Pancreas (tissue), 10 donors: ENCODE measurements at regions of chr14 and their contacts with region 1.

Region 1: DNA sequence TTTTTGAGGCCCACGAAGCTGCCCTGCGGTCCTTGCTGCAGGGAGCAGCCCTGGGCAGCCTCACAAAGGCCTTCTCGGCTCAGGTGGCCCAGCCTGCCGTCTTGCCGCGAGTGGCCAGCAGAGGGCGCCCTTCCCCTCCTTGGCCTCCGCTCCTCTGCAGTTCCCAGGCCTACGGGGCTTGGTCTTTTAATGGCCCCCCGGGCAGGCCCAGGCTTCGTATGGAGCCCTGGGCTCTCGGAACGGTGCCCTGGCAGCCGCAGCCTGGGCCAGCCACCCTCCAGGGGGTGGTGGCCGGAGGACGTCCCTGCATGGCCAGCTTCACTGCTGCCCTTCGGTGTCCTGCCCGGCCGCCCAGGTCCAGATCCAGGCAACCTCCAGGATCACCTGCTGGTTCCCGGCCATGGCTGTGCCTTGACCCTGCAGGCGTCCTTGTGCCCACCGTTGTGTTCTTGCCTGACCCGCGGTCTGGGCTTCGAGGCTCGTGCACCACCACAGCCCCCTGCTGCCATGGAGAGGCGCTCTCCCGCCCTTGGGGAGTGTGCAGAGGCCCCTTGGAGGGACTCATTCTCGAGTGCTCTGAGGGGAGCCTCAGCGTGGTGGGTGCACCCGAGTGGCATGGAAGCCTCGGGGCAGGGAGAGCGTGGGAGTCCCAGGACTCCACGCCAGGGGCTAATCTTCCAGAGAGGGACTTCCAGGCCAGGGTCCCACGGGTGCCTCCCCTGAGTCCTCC is 9.4 kb downstream of the ASPG start:
- DNase-seq: peak; percentile 45 to 96 (median 81)
- ATAC-seq: peak; percentile 80 to 96 (median 88)
- H3K4me3 ChIP-seq: no peak overlapping the region
- H3K27ac ChIP-seq: no peak overlapping the region
- H3K4me1 ChIP-seq: no peaks in the 10 kb centered on the region
- H3K27me3 ChIP-seq: peaks cover 0 to 3% (median 0%) of the 10 kb centered on the region in 4 donors
- CTCF ChIP-seq: peak; percentile 97 to 99 (median 98)

Region 2: DNA sequence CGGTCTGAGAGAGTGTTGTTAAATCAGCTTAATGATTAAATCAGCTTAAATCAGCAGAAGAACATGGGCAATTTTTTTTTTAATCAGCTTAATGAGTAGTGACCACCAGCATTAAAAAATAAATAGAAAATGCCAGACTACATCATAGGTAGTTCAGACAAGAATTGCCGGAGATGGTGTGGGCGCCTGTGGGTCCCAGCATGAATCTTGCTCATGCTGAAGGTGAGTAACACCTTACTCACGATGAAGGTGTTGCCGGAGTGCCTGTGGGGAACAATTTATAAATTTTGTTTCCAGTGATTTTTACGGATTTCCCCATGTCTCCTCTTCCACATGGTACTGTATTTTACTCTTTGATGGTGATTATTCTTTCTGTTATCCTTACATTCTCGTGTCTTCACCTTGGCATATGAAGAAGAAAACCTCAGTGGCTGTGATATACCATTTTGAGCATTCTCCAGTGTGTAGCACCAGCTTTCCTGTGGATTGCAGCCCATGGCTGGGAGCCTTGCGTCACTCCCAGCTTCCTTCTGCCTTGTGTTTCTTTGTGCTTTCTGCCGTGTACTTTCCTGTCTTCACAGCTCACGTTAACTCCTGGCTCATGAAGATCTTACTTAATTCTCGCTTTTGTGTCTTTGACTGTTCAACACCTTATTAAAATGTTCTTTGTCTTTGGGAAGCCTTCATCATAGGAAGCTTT is 161.9 kb before region 1 on chr14:
- intact Hi-C with region 1: no loop called
- DNase-seq: no peak
- ATAC-seq: no peak
- H3K4me3 ChIP-seq: no peak overlapping the region
- H3K27ac ChIP-seq: no peak overlapping the region
- H3K4me1 ChIP-seq: no peaks in the 10 kb centered on the region
- H3K27me3 ChIP-seq: no peaks in the 10 kb centered on the region
- CTCF ChIP-seq: no peak

Region 3: DNA sequence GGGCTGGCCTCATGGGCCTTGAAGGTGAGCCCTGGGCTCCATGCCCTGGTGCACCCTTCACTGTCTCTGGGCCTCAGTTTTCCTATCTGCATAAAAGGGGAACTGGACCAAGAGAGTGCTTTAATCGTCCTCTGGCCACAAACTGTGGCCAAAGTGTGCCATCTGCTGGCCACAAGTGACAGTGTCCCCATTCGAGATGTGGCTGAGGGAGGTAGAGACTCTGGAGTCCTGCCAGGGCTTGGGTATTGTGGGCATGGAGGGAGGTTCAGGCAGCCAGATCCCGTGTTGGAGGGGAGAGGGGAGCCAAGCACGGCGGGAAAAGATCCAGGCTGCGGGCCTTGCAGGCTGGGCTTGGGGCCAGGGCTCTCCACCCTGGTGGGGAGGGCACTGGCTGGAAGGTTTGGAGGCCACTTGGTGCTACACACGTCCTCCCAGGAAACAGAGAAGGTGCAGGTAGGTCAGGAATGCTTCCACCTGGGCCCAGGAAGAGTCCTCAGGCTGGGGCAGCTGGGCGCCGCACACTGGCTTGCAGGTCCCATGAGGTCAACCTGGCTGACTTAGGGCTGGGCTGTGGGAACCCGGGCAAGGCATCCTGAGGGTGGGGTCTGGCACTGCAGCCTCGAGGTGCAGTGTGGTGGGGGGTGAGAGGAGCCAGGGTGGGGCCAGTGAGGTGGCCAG is 36.2 kb after region 1 on chr14:
- intact Hi-C with region 1: loop called in 1 of 3 experiments (anchors 5 kb)
- DNase-seq: peak; percentile 63 to 84 (median 75)
- ATAC-seq: peak; percentile 78 to 91 (median 88)
- H3K4me3 ChIP-seq: no peak overlapping the region
- H3K27ac ChIP-seq: no peak overlapping the region
- H3K4me1 ChIP-seq: peaks cover 0 to 2% (median 0%) of the 10 kb centered on the region in 3 donors
- H3K27me3 ChIP-seq: peaks cover 0 to 9% (median 0%) of the 10 kb centered on the region in 4 donors
- CTCF ChIP-seq: peak; percentile 62 to 81 (median 71)

Region 4: GRCh38 chr14:104143521-104144452 is 48.9 kb after region 1 on chr14:
- intact Hi-C with region 1: no loop called
- DNase-seq: peak in 2 of 6 donors; percentile 28 to 67
- ATAC-seq: no peak
- H3K4me3 ChIP-seq: no peak overlapping the region
- H3K27ac ChIP-seq: no peak overlapping the region
- H3K4me1 ChIP-seq: peaks cover 0 to 3% (median 0%) of the 10 kb centered on the region in 3 donors
- H3K27me3 ChIP-seq: no peaks in the 10 kb centered on the region
- CTCF ChIP-seq: no peak

Region 5: DNA sequence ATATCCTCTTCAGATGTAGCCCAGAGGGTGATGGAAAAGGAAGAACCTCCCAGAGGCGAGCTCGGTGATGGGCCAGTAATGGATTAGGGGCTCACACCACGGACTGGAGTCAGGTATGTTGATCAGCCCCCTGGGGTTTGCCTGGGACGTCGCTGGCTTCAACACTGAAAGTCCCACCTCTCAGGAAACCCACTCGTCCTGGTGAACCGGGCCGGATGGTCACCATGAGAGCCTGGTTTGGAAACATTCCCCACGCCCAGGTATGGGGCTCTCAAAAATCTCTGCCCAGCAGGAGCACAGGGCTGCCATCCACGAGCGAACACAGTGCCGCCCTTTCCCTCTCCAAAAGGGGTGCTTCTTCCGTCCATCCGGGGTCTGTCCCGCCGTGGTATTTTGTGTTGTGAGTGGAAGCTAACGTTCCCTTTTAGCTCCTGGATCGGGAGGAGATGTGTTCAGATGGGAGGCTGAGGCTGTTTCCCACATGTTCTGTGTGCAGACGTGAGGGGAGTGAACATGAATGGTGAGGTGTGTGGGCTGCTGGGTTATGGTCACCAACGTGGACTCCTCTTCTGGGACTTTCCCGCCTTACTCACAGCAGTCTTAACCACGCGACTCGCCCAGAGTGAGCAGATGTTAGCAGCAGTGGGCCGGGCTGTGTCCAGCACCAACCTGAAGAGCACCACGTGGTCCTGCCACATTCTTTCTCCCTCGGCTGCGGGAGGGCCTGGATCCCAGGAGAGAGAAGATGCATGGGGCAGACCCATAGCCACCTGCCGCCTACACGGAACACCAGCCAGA is 182.7 kb after region 1 on chr14:
- intact Hi-C with region 1: no loop called
- DNase-seq: peak in 4 of 6 donors; percentile 5 to 32 (median 20)
- ATAC-seq: no peak
- H3K4me3 ChIP-seq: no peak overlapping the region
- H3K27ac ChIP-seq: no peak overlapping the region
- H3K4me1 ChIP-seq: no peaks in the 10 kb centered on the region
- H3K27me3 ChIP-seq: peaks cover 0 to 6% (median 0%) of the 10 kb centered on the region in 4 donors
- CTCF ChIP-seq: no peak